CD4-positive, alpha-beta T cell (primary cell): ENCODE measurements at regions of chr6 and their contacts with region 1.

Region 1: GRCh38 chr6:52419809-52420670 is at the start of gene EFHC1:
- DNase-seq: peak; percentile 95 to 99 (median 97)
- ATAC-seq: peak; percentile 88
- H3K4me3 ChIP-seq: peak within 1 kb of the TSS; percentile 80
- H3K4me3 Mint-ChIP-seq: no peak within 1 kb of the TSS
- H3K27ac ChIP-seq: peak within 1 kb of the TSS; percentile 33 to 57
- H3K27ac Mint-ChIP-seq: no peak within 1 kb of the TSS
- H3K4me1 ChIP-seq: peaks cover 23% of the 10 kb centered on the region
- H3K4me1 Mint-ChIP-seq: peaks cover 19% of the 10 kb centered on the region
- H3K27me3 ChIP-seq: no peaks in the 10 kb centered on the region
- H3K27me3 Mint-ChIP-seq: no peaks in the 10 kb centered on the region
- CTCF ChIP-seq: no peak
- total RNA-seq, gene EFHC1: 3.4 to 4.8 TPM

Region 2: GRCh38 chr6:52063584-52064344 is 356.3 kb before region 1 on chr6:
- CTCF ChIA-PET with region 1: no interaction called
- POLR2A ChIA-PET with region 1: no interaction called
- intact Hi-C with region 1: loop called in 1 of 2 experiments (anchors 10 kb)
- DNase-seq: peak; percentile 12 to 76 (median 38)
- ATAC-seq: peak; percentile 90
- H3K4me3 ChIP-seq: peak overlapping the region; percentile 26
- H3K4me3 Mint-ChIP-seq: peak overlapping the region; percentile 64
- H3K27ac ChIP-seq: peak overlapping the region in 1 of 2 donors; percentile 21
- H3K27ac Mint-ChIP-seq: peak overlapping the region; percentile 24
- H3K4me1 ChIP-seq: peaks cover 11% of the 10 kb centered on the region
- H3K4me1 Mint-ChIP-seq: peaks cover 14% of the 10 kb centered on the region
- H3K27me3 ChIP-seq: no peaks in the 10 kb centered on the region
- H3K27me3 Mint-ChIP-seq: no peaks in the 10 kb centered on the region
- CTCF ChIP-seq: peak; percentile 55

Region 3: DNA sequence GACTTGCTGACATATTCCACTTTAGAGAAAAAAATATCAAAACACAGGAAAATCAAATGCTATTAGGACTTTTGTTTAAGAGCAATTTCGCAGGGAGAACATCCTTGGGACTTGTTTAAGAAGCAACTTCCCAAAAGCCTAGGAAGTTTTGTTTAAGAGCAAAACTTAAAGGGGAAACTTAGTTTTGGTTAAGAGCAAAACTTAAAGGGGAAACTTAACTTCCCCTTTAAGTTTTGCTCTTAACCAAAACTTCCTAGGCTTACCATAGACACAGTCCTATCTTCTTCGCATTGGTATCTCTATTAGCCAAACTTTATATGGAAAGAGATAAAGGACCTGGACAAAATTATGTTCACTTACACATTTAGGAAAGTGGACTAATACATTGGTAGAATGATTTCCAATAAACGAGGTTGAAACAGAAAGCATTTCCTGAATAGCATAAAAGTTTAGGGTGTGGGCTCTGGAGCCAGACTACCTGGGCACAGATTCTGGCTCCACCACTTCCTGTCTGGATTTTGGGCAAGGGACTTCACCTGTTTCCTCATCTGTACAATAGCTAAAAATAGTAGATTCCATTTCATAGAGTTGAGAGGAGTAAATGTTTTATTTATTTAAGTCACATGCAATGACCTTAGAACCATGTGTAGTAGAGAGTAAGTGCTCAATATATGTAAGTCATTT is 42.4 kb before region 1 on chr6:
- CTCF ChIA-PET with region 1: no interaction called
- POLR2A ChIA-PET with region 1: no interaction called
- intact Hi-C with region 1: no loop called
- DNase-seq: peak in 5 of 14 experiments; percentile 12 to 47 (median 33)
- ATAC-seq: peak; percentile 72
- H3K4me3 ChIP-seq: no peak overlapping the region
- H3K4me3 Mint-ChIP-seq: peak overlapping the region; percentile 70
- H3K27ac ChIP-seq: no peak overlapping the region
- H3K27ac Mint-ChIP-seq: peak overlapping the region; percentile 80
- H3K4me1 ChIP-seq: peaks cover 41% of the 10 kb centered on the region
- H3K4me1 Mint-ChIP-seq: peaks cover 82% of the 10 kb centered on the region
- H3K27me3 ChIP-seq: no peaks in the 10 kb centered on the region
- H3K27me3 Mint-ChIP-seq: no peaks in the 10 kb centered on the region
- CTCF ChIP-seq: no peak

Region 4: GRCh38 chr6:52399511-52400312 is 20.3 kb before region 1 on chr6:
- CTCF ChIA-PET with region 1: interaction called, 10 read pairs
- POLR2A ChIA-PET with region 1: interaction called, 7 read pairs
- intact Hi-C with region 1: loop called in 1 of 2 experiments (anchors 1 kb)
- DNase-seq: peak in 5 of 14 experiments; percentile 34 to 75 (median 57)
- ATAC-seq: peak; percentile 43
- H3K4me3 ChIP-seq: no peak overlapping the region
- H3K4me3 Mint-ChIP-seq: peak overlapping the region; percentile 54
- H3K27ac ChIP-seq: peak overlapping the region; percentile 67 to 82
- H3K27ac Mint-ChIP-seq: peak overlapping the region; percentile 97
- H3K4me1 ChIP-seq: peaks cover 70% of the 10 kb centered on the region
- H3K4me1 Mint-ChIP-seq: peaks cover 80% of the 10 kb centered on the region
- H3K27me3 ChIP-seq: no peaks in the 10 kb centered on the region
- H3K27me3 Mint-ChIP-seq: no peaks in the 10 kb centered on the region
- CTCF ChIP-seq: peak; percentile 93

Region 5: GRCh38 chr6:52517502-52518278 is 97.7 kb after region 1 on chr6:
- CTCF ChIA-PET with region 1: interaction called, 3 read pairs
- POLR2A ChIA-PET with region 1: no interaction called
- intact Hi-C with region 1: loop called in 1 of 2 experiments (anchors 5 kb)
- DNase-seq: peak in 1 of 14 experiments; percentile 17
- ATAC-seq: no peak
- H3K4me3 ChIP-seq: no peak overlapping the region
- H3K4me3 Mint-ChIP-seq: no peak overlapping the region
- H3K27ac ChIP-seq: no peak overlapping the region
- H3K27ac Mint-ChIP-seq: no peak overlapping the region
- H3K4me1 ChIP-seq: no peaks in the 10 kb centered on the region
- H3K4me1 Mint-ChIP-seq: no peaks in the 10 kb centered on the region
- H3K27me3 ChIP-seq: no peaks in the 10 kb centered on the region
- H3K27me3 Mint-ChIP-seq: no peaks in the 10 kb centered on the region
- CTCF ChIP-seq: no peak

Region 6: GRCh38 chr6:52598123-52598823 is 178.2 kb after region 1 on chr6:
- CTCF ChIA-PET with region 1: interaction called, 3 read pairs
- POLR2A ChIA-PET with region 1: no interaction called
- intact Hi-C with region 1: loop called in 1 of 2 experiments (anchors 5 kb)
- DNase-seq: peak in 5 of 14 experiments; percentile 10 to 45 (median 30)
- ATAC-seq: no peak
- H3K4me3 ChIP-seq: no peak overlapping the region
- H3K4me3 Mint-ChIP-seq: no peak overlapping the region
- H3K27ac ChIP-seq: no peak overlapping the region
- H3K27ac Mint-ChIP-seq: no peak overlapping the region
- H3K4me1 ChIP-seq: no peaks in the 10 kb centered on the region
- H3K4me1 Mint-ChIP-seq: peaks cover 9% of the 10 kb centered on the region
- H3K27me3 ChIP-seq: no peaks in the 10 kb centered on the region
- H3K27me3 Mint-ChIP-seq: no peaks in the 10 kb centered on the region
- CTCF ChIP-seq: peak; percentile 22

Region 7: DNA sequence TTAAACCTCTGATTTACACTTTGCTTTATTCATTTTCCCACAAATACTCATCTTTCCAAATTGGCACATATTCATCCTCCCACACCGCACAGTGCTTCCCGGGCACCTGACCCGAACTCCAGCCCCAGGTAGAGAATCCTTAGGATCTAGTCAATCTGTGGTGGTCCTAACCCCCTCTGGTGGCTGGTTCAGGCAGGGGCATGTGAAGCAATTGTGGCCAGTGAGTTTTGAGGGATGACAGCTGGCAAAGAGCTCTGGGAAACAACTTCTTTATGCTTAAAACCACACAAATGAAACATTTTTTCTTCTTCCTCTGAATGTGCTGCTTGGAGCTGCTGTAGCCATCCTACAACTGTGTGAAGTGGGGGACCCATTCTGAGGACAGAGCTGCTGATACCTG is 874.1 kb after region 1 on chr6:
- CTCF ChIA-PET with region 1: no interaction called
- POLR2A ChIA-PET with region 1: no interaction called
- intact Hi-C with region 1: no loop called
- DNase-seq: peak in 3 of 14 experiments; percentile 22 to 46 (median 40)
- ATAC-seq: no peak
- H3K4me3 ChIP-seq: no peak overlapping the region
- H3K4me3 Mint-ChIP-seq: no peak overlapping the region
- H3K27ac ChIP-seq: peak overlapping the region in 1 of 2 donors; percentile 23
- H3K27ac Mint-ChIP-seq: peak overlapping the region; percentile 73
- H3K4me1 ChIP-seq: peaks cover 53% of the 10 kb centered on the region
- H3K4me1 Mint-ChIP-seq: peaks cover 89% of the 10 kb centered on the region
- H3K27me3 ChIP-seq: no peaks in the 10 kb centered on the region
- H3K27me3 Mint-ChIP-seq: no peaks in the 10 kb centered on the region
- CTCF ChIP-seq: peak; percentile 33

Region 8: DNA sequence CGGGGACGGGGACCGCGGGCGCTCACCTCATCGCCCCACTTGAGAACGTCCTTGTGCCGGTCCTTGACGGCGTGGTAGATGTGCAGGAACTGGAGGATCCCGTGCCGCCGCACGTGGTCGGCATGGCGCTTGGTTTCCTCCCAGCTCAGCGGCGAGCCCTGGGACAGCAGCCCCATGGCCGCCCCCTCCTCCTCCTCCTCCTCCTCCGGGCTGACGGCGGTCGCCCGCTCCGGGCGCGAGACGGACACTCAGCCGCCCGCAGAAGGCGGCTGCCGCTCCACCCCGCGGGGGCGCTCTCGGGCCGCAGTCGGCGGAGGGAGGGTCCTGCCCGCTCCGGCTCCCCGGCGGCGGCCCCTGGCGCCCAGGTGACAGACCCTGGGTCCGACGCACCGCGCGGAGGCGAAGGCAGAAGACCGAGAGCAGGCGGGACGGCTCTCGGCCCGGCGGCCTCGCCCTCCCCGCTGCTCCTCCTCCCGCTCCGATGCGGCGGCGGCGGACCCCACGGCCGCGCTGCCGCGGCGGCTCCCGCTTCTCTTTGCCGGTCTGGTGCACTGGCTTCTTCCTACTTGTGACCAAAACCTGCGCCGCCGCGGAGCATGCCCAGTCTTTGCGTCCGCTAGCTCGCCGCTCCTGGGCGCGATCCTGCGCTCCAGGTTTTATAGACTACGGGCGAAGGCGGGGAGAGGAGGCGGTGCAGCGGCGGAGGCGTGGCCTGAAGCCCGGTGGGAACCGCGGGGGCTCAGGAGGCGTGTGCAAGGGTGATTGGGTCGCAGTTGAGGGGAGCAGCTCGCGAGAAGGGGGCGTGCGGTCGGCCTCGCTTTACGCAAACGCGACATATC is 1124.6 kb after region 1 on chr6 and contains the start of gene GCLC:
- CTCF ChIA-PET with region 1: no interaction called
- POLR2A ChIA-PET with region 1: no interaction called
- intact Hi-C with region 1: loop called in 1 of 2 experiments (anchors 10 kb)
- DNase-seq: peak; percentile 71 to 95 (median 83)
- ATAC-seq: peak; percentile 60
- H3K4me3 ChIP-seq: peak within 1 kb of the TSS; percentile 54
- H3K4me3 Mint-ChIP-seq: peak within 1 kb of the TSS; percentile 99
- H3K27ac ChIP-seq: peak within 1 kb of the TSS in 1 of 2 donors; percentile 31
- H3K27ac Mint-ChIP-seq: peak within 1 kb of the TSS; percentile 69
- H3K4me1 ChIP-seq: peaks cover 43% of the 10 kb centered on the region
- H3K4me1 Mint-ChIP-seq: peaks cover 74% of the 10 kb centered on the region
- H3K27me3 ChIP-seq: no peaks in the 10 kb centered on the region
- H3K27me3 Mint-ChIP-seq: no peaks in the 10 kb centered on the region
- CTCF ChIP-seq: peak; percentile 67
- total RNA-seq, gene GCLC: 8.9 to 10.1 TPM